HEK293 (cell line): ENCODE measurements at regions of chr17 and their contacts with region 1.

Region 1: DNA sequence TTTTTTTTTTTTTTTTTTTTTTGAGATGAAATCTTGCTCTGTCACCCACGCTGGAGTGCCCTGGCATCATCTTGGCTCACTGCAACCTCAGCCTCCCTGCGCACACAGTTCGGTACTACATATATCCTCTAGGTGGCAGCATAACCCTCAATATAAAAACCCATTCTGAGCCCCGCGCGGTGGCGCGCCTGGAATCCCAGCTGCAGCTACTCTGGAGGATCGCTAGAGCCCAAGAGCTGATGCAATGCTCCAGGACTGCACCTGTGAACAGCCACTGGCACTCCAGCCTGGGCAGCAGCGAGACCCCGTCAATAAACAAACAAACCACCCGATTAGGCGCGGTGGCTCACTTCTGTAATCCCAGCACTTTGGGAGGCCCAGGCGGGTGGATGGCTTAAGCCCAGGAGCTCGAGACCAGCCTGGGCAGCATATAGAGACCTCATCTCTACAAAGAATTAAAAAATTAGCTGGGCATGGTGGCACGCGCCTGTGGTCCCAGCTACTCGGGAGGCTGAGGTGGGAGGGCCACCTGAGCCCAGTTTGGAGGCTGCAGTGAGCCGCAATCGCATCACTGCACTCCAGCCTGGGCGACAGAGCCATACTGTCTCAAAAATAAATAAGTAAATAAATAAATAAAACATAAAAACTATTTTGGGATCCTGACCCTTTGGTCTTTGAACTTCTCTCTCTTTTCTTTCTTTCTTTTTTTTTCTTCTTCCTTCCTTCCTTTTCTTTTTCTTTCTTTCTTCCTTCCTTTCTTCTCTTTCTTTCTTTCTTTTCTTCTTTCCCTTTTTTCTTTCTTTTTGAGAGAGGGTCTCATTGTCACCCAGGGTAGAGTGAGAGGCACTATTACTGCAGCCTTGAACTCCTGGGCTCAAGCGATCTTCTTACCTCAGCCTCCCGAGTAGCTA is 15.4 kb upstream of the AKAP10 start:
- H3K4me3 ChIP-seq: peak overlapping the region; percentile 19
- H3K27ac ChIP-seq: no peak overlapping the region
- H3K4me1 ChIP-seq: no peaks in the 10 kb centered on the region
- CTCF ChIP-seq: peak; percentile 96

Region 2: GRCh38 chr17:19897901-19898300 is 95.2 kb before region 1 on chr17:
- CTCF ChIA-PET with region 1: no interaction called
- POLR2A ChIA-PET with region 1: no interaction called
- H3K4me3 ChIP-seq: no peak overlapping the region
- H3K27ac ChIP-seq: no peak overlapping the region
- H3K4me1 ChIP-seq: no peaks in the 10 kb centered on the region
- CTCF ChIP-seq: no peak

Region 3: DNA sequence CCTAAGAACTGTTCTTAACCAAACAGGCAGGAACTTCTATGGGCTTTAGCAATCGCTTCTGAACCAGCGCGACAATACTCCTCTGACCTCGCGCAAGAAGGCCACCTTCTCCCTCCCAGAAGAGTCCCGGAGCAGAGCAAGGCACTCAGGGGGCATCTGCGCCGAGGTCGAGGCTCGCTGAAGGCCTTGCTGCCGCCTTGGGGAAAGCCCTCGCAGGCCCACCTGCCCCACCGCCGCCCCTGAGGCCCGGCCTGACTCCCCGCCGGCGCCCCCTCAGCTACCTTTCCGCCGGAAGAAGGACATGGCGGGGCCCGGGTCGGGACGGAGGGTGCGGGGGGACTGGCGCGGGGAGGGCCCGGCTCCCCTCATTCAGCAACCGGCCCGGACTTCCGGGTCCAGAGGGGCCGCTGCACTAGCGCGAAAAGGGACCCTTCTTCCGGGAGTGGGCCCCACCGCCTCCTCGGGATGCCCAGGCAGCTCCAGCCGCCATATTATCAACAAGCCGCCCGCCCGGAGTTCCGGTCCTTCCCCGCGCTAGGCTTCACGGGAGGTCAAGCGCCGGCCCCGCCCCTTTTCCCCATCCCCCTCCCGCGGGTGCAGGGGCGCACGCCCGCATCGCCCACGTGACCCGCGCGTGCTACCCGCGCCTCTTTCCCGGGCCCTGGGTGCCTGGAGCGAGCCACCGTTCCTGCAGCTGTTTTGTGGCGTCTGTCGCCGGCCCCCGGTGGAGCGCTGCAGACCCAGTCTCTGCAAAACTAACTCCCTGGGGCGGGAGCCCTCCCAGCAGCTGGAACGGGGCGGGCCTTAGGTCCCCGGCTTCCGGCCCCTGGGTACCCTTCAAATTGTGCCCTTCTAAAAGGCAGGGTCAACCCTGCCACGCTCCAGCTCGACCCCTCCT is 15.5 kb before region 1 on chr17 and contains the start of gene AKAP10:
- CTCF ChIA-PET with region 1: interaction called, 14 read pairs
- POLR2A ChIA-PET with region 1: interaction called, 10 read pairs
- H3K4me3 ChIP-seq: peak within 1 kb of the TSS; percentile 75
- H3K27ac ChIP-seq: peak within 1 kb of the TSS; percentile 83
- H3K4me1 ChIP-seq: peaks cover 2% of the 10 kb centered on the region; the same call in 1 of the 2 replicates
- CTCF ChIP-seq: no peak; the same call in 1 of the 2 replicates

Region 4: DNA sequence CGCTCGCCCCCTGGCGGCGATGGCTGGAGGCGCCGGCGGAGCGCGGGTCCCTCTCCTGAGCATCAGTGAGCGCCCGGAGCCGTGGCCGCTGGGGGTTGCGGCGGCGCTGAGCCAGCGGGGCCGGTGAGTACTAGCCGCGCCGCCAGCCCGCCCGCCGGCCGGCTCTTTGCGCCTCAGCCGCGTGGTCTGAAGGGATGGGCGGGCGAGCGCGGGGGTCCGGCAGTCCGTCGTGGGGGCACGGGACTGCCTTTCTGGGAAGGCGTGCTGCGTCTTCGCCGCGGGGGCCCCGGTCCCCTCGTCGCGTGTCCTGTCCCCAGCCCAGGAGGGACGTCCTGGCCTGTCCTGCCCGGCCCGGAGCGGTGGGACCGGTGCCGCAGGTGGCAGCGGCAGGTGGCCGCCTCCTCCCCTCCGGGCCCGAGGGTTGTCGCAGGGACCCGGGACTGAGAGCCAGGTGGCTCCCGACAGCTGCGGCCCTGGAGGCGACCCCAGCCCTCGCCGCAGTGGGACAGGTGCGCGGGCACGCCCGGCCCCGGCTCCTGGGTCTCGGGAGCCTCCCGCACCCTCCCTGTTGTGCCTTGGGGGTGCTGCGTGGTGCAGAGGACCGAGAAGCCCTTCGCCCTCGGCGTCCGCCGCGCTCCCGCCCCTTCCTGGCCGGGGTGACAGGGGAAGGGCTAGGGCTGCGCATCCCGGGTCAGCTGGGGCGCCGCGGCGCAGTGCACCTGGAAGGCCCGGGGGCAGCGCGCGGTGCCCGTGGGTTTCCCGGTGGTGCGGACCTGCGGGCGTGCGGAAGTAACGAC is 16.4 kb after region 1 on chr17 and contains the start of gene SPECC1:
- CTCF ChIA-PET with region 1: interaction called, 68 read pairs
- POLR2A ChIA-PET with region 1: interaction called, 20 read pairs
- H3K4me3 ChIP-seq: peak within 1 kb of the TSS; percentile 87
- H3K27ac ChIP-seq: peak within 1 kb of the TSS; percentile 72
- H3K4me1 ChIP-seq: peaks cover 12% of the 10 kb centered on the region
- CTCF ChIP-seq: no peak

Region 5: DNA sequence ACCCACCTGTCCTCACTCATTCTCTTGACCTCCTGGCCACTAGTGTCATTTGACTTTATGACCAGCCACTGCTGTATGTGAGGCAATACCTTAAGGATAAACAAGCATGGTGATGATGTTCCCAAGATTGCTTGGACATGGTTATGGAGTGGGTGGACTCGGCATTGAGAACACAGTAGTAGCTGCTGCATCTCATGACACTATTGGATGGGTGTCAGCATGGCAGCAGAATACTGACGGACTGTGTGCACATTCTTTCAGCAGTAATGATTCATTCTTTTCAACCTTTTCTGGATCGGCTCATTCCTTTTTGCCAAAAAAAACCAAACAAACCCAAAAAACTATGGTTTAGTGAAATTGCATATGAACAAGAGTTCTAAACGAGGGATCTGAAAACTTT is 29.6 kb after region 1 on chr17:
- CTCF ChIA-PET with region 1: no interaction called
- POLR2A ChIA-PET with region 1: interaction called, 10 read pairs
- H3K4me3 ChIP-seq: no peak overlapping the region
- H3K27ac ChIP-seq: no peak overlapping the region
- H3K4me1 ChIP-seq: no peaks in the 10 kb centered on the region
- CTCF ChIP-seq: no peak

Region 6: GRCh38 chr17:20121359-20122253 is 128.5 kb after region 1 on chr17:
- CTCF ChIA-PET with region 1: interaction called, 61 read pairs
- POLR2A ChIA-PET with region 1: interaction called, 12 read pairs
- H3K4me3 ChIP-seq: no peak overlapping the region
- H3K27ac ChIP-seq: no peak overlapping the region
- H3K4me1 ChIP-seq: no peaks in the 10 kb centered on the region
- CTCF ChIP-seq: peak; percentile 66